GM12878 (cell line): ENCODE measurements at regions of chr3 and their contacts with region 1.

Region 1: DNA sequence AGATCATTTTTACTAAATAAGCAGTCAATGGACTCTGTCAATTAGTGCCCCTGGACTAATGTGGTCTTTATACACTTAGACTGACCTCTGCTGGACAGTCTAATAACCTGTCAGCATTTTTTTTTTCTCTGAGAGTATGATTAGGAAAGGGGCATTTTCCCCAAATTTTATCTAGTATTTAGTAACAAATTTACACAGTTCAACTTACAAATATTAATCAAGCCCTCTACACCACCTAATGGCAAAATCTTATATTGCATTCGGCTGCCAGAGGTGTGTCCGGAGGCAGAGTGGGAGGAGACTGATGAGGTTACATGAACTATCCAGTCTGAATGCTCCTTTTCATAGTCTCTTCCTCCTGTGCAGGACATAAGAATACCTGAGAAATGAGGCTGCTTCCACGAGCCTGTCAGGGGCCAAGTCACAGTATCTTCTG is 36.0 kb upstream of the COLQ start:
- DNase-seq: peak; percentile 67
- ATAC-seq: peak; percentile 88
- H3K4me3 ChIP-seq: no peak overlapping the region
- H3K27ac ChIP-seq: no peak overlapping the region
- H3K4me1 ChIP-seq: peaks cover 13% of the 10 kb centered on the region
- H3K27me3 ChIP-seq: no peaks in the 10 kb centered on the region
- CTCF ChIP-seq: peak; percentile 37 to 64 (median 55); a peak in 4 of 6 replicates
- EP300 ChIP-seq: no peak
- POLR2A ChIP-seq: no peak
- RAD21 ChIP-seq: peak; percentile 52

Region 2: GRCh38 chr3:15199493-15200105 is 357.9 kb before region 1 on chr3:
- CTCF ChIA-PET with region 1: interaction called, 51 read pairs
- POLR2A ChIA-PET with region 1: no interaction called
- RAD21 ChIA-PET with region 1: interaction called, 10 read pairs
- SMC1A ChIA-PET with region 1: interaction called, 18 read pairs
- in situ Hi-C with region 1: no loop called
- intact Hi-C with region 1: loop called (anchors 1 kb)
- DNase-seq: no peak
- ATAC-seq: no peak
- H3K4me3 ChIP-seq: no peak overlapping the region
- H3K27ac ChIP-seq: no peak overlapping the region
- H3K4me1 ChIP-seq: no peaks in the 10 kb centered on the region
- H3K27me3 ChIP-seq: no peaks in the 10 kb centered on the region; a peak in 1 of 4 replicates
- CTCF ChIP-seq: no peak
- EP300 ChIP-seq: no peak
- POLR2A ChIP-seq: no peak
- RAD21 ChIP-seq: no peak

Region 3: GRCh38 chr3:15361494-15362212 is 195.9 kb before region 1 on chr3:
- CTCF ChIA-PET with region 1: interaction called, 13 read pairs
- POLR2A ChIA-PET with region 1: no interaction called
- RAD21 ChIA-PET with region 1: interaction called, 18 read pairs
- SMC1A ChIA-PET with region 1: interaction called, 12 read pairs
- in situ Hi-C with region 1: no loop called
- intact Hi-C with region 1: no loop called
- DNase-seq: peak; percentile 99
- ATAC-seq: peak; percentile 82
- H3K4me3 ChIP-seq: peak overlapping the region; percentile 40; the same call in 1 of the 2 replicates
- H3K27ac ChIP-seq: peak overlapping the region; percentile 84
- H3K4me1 ChIP-seq: peaks cover 47% of the 10 kb centered on the region
- H3K27me3 ChIP-seq: no peaks in the 10 kb centered on the region
- CTCF ChIP-seq: no peak
- EP300 ChIP-seq: peak in 1 of 2 experiments; percentile 98
- POLR2A ChIP-seq: peak; percentile 63
- RAD21 ChIP-seq: peak; percentile 2

Region 4: DNA sequence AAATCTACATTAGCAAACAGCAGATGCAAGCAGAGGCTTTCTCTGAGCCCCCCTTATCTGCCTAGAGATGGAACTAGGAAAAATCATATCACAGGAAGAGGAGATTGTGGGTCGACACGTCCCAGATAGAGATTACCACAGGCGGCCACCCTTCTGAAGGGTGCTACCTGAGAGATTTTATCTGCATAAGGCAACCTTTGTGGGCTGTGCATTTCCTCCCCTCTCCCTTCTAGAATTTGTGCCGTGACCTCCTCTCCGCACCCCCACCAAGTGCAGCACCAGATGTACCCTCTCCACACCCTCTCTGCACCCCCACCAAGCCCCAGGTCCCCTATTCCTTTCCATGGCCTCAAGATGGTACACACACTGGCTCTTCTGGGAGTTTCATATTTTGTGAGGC is 157.6 kb before region 1 on chr3:
- CTCF ChIA-PET with region 1: interaction called, 68 read pairs
- POLR2A ChIA-PET with region 1: no interaction called
- RAD21 ChIA-PET with region 1: interaction called, 19 read pairs
- SMC1A ChIA-PET with region 1: interaction called, 45 read pairs
- in situ Hi-C with region 1: no loop called
- intact Hi-C with region 1: loop called (anchors 5 kb)
- DNase-seq: no peak
- ATAC-seq: no peak
- H3K4me3 ChIP-seq: no peak overlapping the region
- H3K27ac ChIP-seq: no peak overlapping the region
- H3K4me1 ChIP-seq: peaks cover 10% of the 10 kb centered on the region
- H3K27me3 ChIP-seq: no peaks in the 10 kb centered on the region
- CTCF ChIP-seq: no peak
- EP300 ChIP-seq: no peak
- POLR2A ChIP-seq: no peak
- RAD21 ChIP-seq: no peak

Region 5: GRCh38 chr3:15467227-15468181 is 90.0 kb before region 1 on chr3:
- CTCF ChIA-PET with region 1: interaction called, 30 read pairs
- POLR2A ChIA-PET with region 1: interaction called, 12 read pairs
- RAD21 ChIA-PET with region 1: interaction called, 25 read pairs
- SMC1A ChIA-PET with region 1: interaction called, 48 read pairs
- in situ Hi-C with region 1: no loop called
- intact Hi-C with region 1: loop called (anchors 5 kb)
- DNase-seq: peak; percentile 85
- ATAC-seq: peak; percentile 97
- H3K4me3 ChIP-seq: no peak overlapping the region
- H3K27ac ChIP-seq: no peak overlapping the region
- H3K4me1 ChIP-seq: peaks cover 6% of the 10 kb centered on the region
- H3K27me3 ChIP-seq: no peaks in the 10 kb centered on the region
- CTCF ChIP-seq: no peak
- EP300 ChIP-seq: peak; percentile 66 to 78; a peak in 2 of 4 replicates
- POLR2A ChIP-seq: no peak
- RAD21 ChIP-seq: no peak

Region 6: DNA sequence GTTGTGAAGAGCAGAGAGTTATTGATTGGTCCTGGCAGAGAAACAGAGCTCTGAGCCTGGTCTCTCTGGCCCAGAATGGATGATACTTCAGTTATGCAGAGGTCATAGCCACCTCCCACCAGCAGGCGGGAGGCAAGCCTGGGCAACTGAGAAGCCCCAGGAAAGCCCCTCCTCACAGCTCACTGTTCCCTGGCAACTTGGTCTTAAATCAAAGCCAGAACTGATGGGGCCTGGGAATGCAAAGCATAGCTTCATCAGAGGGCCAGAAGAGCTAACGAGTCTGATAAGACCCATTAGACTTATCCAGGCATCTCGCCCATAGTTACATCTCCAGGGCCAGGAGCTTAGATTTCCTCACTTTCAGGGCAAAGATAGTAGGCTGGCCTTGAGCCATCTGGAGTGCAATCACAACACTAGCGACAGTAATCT is 30.5 kb before region 1 on chr3:
- CTCF ChIA-PET with region 1: interaction called, 72 read pairs
- POLR2A ChIA-PET with region 1: interaction called, 3 read pairs
- RAD21 ChIA-PET with region 1: interaction called, 49 read pairs
- SMC1A ChIA-PET with region 1: interaction called, 58 read pairs
- in situ Hi-C with region 1: no loop called
- intact Hi-C with region 1: loop called (anchors 2 kb)
- DNase-seq: no peak
- ATAC-seq: peak; percentile 98
- H3K4me3 ChIP-seq: no peak overlapping the region
- H3K27ac ChIP-seq: no peak overlapping the region
- H3K4me1 ChIP-seq: no peaks in the 10 kb centered on the region
- H3K27me3 ChIP-seq: no peaks in the 10 kb centered on the region
- CTCF ChIP-seq: peak; percentile 44 to 66 (median 59)
- EP300 ChIP-seq: no peak
- POLR2A ChIP-seq: no peak
- RAD21 ChIP-seq: peak; percentile 66